ACHN (cell line): ENCODE measurements at regions of chr1 and their contacts with region 1.

Region 1: GRCh38 chr1:245512980-245513578 is 358.3 kb downstream of the KIF26B start:
- DNase-seq: peak; percentile 75

Region 2: GRCh38 chr1:245156081-245156735 is 356.9 kb before region 1 on chr1:
- in situ Hi-C with region 1: loop called (anchors 25 kb)
- DNase-seq: peak; percentile 91

Region 3: GRCh38 chr1:245248231-245248731 is 264.8 kb before region 1 on chr1:
- in situ Hi-C with region 1: no loop called
- DNase-seq: no peak

Region 4: GRCh38 chr1:245599371-245600174 is 86.5 kb after region 1 on chr1:
- in situ Hi-C with region 1: no loop called
- DNase-seq: no peak